ENCODE measurements at regions of chr1 and their contacts with region 1.

Region 1: DNA sequence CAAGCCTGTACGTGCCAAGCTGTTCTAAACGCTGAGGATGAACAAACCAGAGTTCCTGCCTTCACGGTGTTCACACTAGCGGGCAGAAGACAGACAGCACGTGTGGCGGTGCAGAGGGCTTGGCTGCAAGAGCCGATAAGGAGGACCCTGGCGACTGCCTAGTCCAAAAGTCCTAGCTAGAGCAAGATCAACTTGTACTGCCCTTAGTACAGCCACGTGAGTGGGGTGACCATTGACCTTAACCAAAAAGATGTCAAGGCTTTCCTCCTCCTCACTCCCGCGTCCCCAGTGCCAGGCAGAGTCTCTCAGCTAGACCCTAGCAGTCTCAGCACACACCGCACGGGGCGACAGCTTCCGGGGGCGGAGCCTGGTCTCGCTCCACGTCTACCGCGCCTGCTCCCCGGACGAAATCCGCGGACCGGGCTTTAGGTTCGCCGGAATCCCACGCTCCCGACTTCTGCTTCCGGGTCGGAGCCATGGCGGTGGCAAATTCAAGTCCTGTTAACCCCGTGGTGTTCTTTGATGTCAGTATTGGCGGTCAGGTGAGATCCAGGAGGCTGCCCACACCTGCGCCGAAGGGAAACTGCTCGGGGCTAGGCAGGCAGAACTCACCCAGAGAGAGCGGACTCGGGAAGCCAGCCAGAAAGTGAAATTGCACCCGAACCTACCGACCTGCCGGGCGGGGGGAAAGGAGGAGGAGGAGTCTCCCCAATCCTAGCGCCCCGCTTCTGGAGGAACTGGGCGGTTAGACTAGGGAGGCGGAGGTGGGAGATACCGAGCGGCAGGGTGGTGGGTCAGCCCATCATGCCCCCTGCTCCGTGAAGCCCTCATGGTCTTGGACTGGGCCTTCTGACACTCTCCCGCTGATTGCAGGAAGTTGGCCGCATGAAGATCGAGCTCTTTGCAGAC is at the start of gene PPIH:
- DNase-seq: peak; percentile 93
- H3K4me3 Mint-ChIP-seq: peak within 1 kb of the TSS; percentile 99
- H3K27ac Mint-ChIP-seq: peak within 1 kb of the TSS; percentile 97
- H3K4me1 Mint-ChIP-seq: peaks cover 37% of the 10 kb centered on the region
- H3K27me3 Mint-ChIP-seq: peaks cover 4% of the 10 kb centered on the region
- total RNA-seq, gene PPIH: 77.5 and 78.7 TPM in 2 replicates

Region 2: DNA sequence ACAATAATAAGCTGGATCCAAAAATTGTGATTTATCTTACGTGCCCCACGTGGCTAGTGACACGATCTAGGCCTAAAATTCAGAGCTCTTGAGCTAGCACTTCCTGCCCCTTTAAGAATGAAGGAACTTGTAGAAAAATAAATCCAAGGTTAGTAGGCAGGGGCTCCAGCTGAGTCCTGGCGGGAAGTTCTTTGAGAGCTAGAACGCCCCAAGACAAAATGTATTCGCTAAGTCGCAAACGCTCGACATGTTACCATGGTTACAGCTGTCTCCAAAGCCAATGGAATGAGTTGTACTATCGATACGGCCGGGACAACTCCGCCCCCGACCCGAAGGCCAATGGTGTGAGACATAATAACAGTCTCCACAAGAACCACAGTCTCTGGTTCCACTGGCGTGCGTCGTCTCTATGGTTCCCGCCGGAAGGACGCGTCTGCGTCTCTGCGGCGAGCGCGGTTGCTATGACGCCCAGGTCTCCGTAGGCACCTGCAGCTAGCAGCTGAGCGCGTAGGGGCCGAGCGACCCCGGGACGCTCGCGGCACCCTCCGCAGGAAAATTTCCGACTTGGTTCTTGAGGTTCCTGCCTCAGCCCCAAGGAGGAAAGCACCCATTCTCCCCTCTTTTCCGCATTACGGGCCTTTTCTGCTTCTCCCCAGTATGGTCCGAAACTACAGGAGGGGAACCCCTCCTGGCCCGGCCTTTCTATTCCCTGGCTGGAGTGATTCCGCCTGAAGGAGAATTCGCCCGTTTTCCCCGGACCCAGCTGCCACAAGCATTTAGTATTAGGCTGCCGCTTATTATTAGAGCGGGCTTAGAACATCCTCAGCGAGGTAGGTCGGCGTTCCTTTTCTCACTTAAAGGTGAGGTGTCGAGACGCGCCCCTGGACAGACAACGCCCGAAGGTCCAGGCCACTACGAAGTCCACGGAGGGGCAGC is 195.1 kb before region 1 on chr1 and contains the start of gene CCDC30:
- intact Hi-C with region 1: loop called (anchors 2 kb)
- DNase-seq: peak; percentile 95
- H3K4me3 Mint-ChIP-seq: peak within 1 kb of the TSS; percentile 76
- H3K27ac Mint-ChIP-seq: peak within 1 kb of the TSS; percentile 67
- H3K4me1 Mint-ChIP-seq: peaks cover 27% of the 10 kb centered on the region
- H3K27me3 Mint-ChIP-seq: peaks cover 11% of the 10 kb centered on the region
- total RNA-seq, gene CCDC30: 1.7 and 2.3 TPM in 2 replicates